Calu3 (cell line): ENCODE measurements at regions of chr12 and their contacts with region 1.

Region 1: DNA sequence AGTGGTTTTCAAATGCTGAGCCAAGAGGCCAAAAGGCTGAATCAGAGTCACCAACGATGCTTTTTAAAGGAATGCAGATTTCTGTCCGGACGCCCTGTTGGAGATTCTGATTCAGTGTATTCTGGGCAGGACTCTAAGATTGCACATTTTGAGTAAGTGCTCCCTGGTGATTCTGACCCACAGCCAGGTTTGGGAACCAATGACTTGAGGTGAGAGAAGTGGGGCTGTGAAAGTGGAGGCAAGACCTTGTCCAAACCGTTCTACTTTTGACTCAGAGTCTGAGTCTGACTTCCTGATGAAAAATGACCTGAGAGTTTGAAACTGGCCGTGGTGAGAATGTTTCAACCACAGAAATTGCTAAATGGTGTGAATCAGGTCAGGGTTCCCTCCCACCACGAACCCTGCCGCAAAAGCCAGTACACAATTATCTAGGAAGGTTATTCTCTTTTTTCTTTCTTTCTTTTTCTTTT is 90.2 kb downstream of the NTN4 start:
- DNase-seq: no peak
- H3K4me3 Mint-ChIP-seq: no peak overlapping the region
- H3K27ac Mint-ChIP-seq: peak overlapping the region; percentile 77
- H3K4me1 Mint-ChIP-seq: peaks cover 27% of the 10 kb centered on the region
- H3K27me3 Mint-ChIP-seq: no peaks in the 10 kb centered on the region
- CTCF ChIP-seq: no peak

Region 2: GRCh38 chr12:95614390-95614982 is 85.9 kb before region 1 on chr12:
- CTCF ChIA-PET with region 1: interaction called, 12 read pairs
- intact Hi-C with region 1: no loop called
- DNase-seq: no peak
- H3K4me3 Mint-ChIP-seq: no peak overlapping the region
- H3K27ac Mint-ChIP-seq: no peak overlapping the region
- H3K4me1 Mint-ChIP-seq: peaks cover 26% of the 10 kb centered on the region
- H3K27me3 Mint-ChIP-seq: no peaks in the 10 kb centered on the region
- CTCF ChIP-seq: no peak

Region 3: DNA sequence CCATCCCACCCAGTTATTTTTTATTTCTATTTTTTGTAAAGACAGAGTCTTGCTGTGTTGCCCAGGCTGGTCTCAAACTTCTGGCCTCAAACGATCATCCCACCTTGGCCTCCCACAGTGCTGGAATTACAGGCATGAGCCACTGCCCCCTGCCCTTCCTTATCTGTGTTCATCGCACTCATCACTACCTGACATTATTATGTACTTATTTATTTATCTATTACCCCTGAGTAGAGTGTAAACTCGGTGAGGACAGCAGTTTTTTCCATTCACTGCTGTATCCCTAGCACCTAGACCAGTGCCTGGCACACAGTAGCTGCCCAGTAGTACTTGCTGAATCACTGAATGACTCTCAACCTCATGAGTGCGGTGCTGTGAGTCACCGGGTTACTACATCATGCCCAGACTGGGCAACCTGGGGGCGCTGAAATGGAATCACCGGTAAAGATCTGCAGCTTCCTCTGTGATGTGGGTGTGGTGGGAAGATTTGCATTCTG is 67.3 kb before region 1 on chr12:
- CTCF ChIA-PET with region 1: interaction called, 4 read pairs
- intact Hi-C with region 1: loop called (anchors 5 kb)
- DNase-seq: peak; percentile 90
- H3K4me3 Mint-ChIP-seq: peak overlapping the region; percentile 42
- H3K27ac Mint-ChIP-seq: peak overlapping the region; percentile 98
- H3K4me1 Mint-ChIP-seq: peaks cover 59% of the 10 kb centered on the region
- H3K27me3 Mint-ChIP-seq: no peaks in the 10 kb centered on the region
- CTCF ChIP-seq: no peak